Activated T-helper 2 cell treated with anti-CD3 and anti-CD28 coated beads, Interferon-gamma antibody, Interleukin-2, Interleukin-4, amounts not matched to agents 10 μg/mL and 5 μg/mL and 100 μg/mL, durations not matched to agents 14 hours and 24 hours and 36 hours (primary cell): ENCODE measurements at regions of chr13 and their contacts with region 1.

Region 1: DNA sequence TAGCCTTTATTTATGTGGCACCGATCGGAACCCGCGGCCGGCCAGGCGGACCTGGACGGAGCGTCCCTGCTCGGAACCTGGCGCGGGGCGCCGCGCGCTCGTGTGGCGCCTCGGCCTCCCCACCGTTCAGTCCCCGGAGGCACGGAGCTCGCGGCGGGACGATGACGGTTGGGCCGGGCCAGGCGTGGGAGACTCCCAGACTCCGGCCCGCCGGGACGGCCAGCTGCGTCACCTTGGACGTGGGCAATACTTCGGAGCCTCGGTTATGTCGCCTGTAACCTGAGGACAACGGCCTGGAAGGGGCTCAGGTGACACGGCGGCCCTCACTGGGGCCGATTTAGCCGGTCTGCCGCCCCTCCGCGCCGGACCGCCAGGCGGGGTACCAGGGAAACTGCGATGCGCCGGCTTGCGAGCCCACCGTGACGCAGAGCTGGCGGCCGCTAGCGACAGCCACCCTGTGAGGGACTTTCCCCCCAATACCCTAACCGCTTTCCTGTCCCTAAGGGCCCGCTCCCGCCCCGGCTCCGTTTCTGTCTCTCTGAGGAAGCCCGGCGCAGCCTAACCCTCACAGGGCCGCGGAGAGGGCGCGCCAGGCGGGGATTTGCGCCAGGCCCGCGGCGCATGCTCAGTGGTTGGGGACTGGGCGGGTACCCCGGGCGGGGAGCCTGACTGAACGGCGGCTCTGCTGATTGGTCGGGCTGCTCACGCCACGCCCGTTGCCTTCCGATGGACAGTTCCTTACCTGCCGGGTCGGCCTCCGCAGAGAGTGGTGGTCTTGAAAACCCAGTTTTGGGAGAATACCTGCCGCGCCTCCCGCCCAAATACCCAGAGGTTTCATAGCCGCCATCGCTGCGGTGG is 109.5 kb upstream of the DOCK9 start:
- DNase-seq: peak; percentile 91
- H3K4me3 Mint-ChIP-seq: peak overlapping the region; percentile 92
- H3K27ac Mint-ChIP-seq: peak overlapping the region; percentile 93
- H3K4me1 Mint-ChIP-seq: peaks cover 33% of the 10 kb centered on the region
- H3K27me3 Mint-ChIP-seq: no peaks in the 10 kb centered on the region

Region 2: GRCh38 chr13:98576963-98577822 is 510.1 kb before region 1 on chr13 and contains the start of gene STK24:
- intact Hi-C with region 1: loop called (anchors 10 kb)
- DNase-seq: peak; percentile 60
- H3K4me3 Mint-ChIP-seq: peak within 1 kb of the TSS; percentile 98
- H3K27ac Mint-ChIP-seq: peak within 1 kb of the TSS; percentile 95
- H3K4me1 Mint-ChIP-seq: peaks cover 36% of the 10 kb centered on the region
- H3K27me3 Mint-ChIP-seq: no peaks in the 10 kb centered on the region
- total RNA-seq, gene STK24: 119 and 127 TPM in 2 replicates

Region 3: GRCh38 chr13:99046851-99047250 is 40.5 kb before region 1 on chr13:
- intact Hi-C with region 1: loop called (anchors 1 kb)
- DNase-seq: no peak
- H3K4me3 Mint-ChIP-seq: peak overlapping the region; percentile 53
- H3K27ac Mint-ChIP-seq: peak overlapping the region; percentile 82
- H3K4me1 Mint-ChIP-seq: peaks cover 83% of the 10 kb centered on the region
- H3K27me3 Mint-ChIP-seq: no peaks in the 10 kb centered on the region

Region 4: DNA sequence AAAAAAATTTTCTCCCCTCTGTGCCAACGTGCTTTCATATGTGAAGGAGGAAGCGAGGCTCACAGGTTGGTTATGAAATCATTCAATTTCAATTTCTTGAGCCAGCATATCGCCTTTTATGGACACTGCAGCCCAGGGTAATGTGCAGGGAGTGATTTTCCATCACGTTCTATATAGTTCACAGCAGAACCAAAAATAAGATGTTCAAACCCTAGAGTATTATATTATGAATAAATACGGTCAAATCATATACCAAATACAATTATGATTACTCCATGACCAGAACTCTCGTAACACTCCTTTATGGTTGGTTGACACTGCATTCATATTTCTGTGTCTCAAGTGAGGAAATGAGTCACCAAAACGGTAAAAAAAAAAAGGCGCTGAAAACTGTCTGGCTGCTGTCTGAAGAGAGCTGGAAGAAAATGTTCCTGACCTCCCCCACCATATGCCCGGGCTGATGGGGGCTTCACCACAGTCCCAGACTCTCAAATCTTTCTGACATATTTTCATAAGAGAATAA is 37.5 kb after region 1 on chr13:
- intact Hi-C with region 1: loop called (anchors 2 kb)
- DNase-seq: no peak
- H3K4me3 Mint-ChIP-seq: peak overlapping the region; percentile 30
- H3K27ac Mint-ChIP-seq: peak overlapping the region; percentile 35
- H3K4me1 Mint-ChIP-seq: peaks cover 43% of the 10 kb centered on the region
- H3K27me3 Mint-ChIP-seq: peaks cover 2% of the 10 kb centered on the region

Region 5: GRCh38 chr13:99258210-99258860 is 171.0 kb after region 1 on chr13 and contains the start of gene GPR18:
- intact Hi-C with region 1: loop called (anchors 5 kb)
- DNase-seq: peak; percentile 31
- H3K4me3 Mint-ChIP-seq: peak within 1 kb of the TSS; percentile 97
- H3K27ac Mint-ChIP-seq: peak within 1 kb of the TSS; percentile 97
- H3K4me1 Mint-ChIP-seq: peaks cover 61% of the 10 kb centered on the region
- H3K27me3 Mint-ChIP-seq: no peaks in the 10 kb centered on the region
- total RNA-seq, gene GPR18: 7.4 and 8.4 TPM in 2 replicates